CD14-positive monocyte (primary cell): ENCODE measurements at regions of chr5 and their contacts with region 1.

Region 1: GRCh38 chr5:74766849-74767578 is at the starts of genes GFM2 and NSA2:
- DNase-seq: peak; percentile 86 to 95 (median 88)
- H3K4me3 ChIP-seq: peak within 1 kb of the TSS; percentile 76 to 95 (median 87)
- H3K4me3 Mint-ChIP-seq: peak within 1 kb of the TSS; percentile 99 to 100
- H3K27ac ChIP-seq: peak within 1 kb of the TSS; percentile 69 to 84
- H3K27ac Mint-ChIP-seq: peak within 1 kb of the TSS; percentile 94 to 99 (median 97)
- H3K4me1 ChIP-seq: peaks cover 17 to 29% of the 10 kb centered on the region in 2 donors
- H3K4me1 Mint-ChIP-seq: peaks cover 19% of the 10 kb centered on the region
- H3K27me3 ChIP-seq: no peaks in the 10 kb centered on the region
- H3K27me3 Mint-ChIP-seq: no peaks in the 10 kb centered on the region
- CTCF ChIP-seq: peak; percentile 9
- polyA plus RNA-seq, gene GFM2: 9.3 to 11.3 (median 10.6) TPM
- polyA plus RNA-seq, gene NSA2: 31.2 to 45.9 (median 37.5) TPM

Region 2: DNA sequence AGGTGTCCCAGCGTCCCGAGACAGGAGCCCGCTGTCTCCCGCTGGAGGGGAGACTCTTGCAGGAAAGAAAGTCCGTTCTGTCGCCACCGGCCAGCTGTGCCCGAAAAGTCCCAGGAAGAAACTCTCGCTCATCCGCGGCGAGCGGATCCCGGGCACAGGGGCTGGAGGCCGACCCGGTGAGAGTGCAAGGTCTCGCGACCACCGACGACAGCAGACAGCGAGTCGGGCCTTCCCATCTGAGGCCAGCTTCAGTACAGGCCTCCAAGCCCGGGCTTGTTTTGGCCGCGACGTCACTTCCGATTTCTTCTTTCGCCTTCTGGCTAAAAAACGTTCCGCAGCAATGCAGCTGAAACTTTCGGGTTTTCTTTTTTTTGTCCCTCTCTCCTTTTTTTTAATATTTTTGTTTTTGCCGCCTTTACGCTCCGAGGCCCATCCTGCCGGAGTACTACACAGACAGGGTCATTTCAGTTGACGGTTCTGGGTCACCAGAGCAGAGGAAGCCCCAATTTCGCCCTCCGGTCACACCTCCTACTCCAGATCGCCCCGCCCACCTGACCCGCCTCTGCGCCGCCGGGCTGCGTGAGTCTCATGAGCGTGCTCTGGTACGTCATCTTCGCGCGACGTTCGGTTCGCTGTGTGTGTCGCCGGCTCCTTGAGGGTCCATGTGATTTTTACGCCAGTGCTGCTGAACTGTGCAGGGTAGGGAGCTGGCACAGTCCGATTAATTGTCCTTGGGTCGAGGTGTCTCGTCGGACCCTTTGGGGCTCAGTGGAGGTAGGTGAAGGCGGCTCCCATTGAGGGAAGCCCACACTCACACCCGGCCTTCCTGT is 1201.7 kb before region 1 on chr5 and contains the starts of genes ANKRA2 and UTP15:
- intact Hi-C with region 1: loop called in 1 of 2 experiments (anchors 2 kb)
- DNase-seq: peak; percentile 96 to 99 (median 98)
- H3K4me3 ChIP-seq: peak within 1 kb of the TSS; percentile 78 to 96 (median 92)
- H3K4me3 Mint-ChIP-seq: peak within 1 kb of the TSS; percentile 91 to 99
- H3K27ac ChIP-seq: peak within 1 kb of the TSS; percentile 87 to 98
- H3K27ac Mint-ChIP-seq: peak within 1 kb of the TSS; percentile 98 to 100 (median 99)
- H3K4me1 ChIP-seq: peaks cover 19 to 21% of the 10 kb centered on the region in 2 donors
- H3K4me1 Mint-ChIP-seq: peaks cover 18% of the 10 kb centered on the region
- H3K27me3 ChIP-seq: no peaks in the 10 kb centered on the region
- H3K27me3 Mint-ChIP-seq: peaks cover 0 to 1% (median 0%) of the 10 kb centered on the region in 3 donors
- CTCF ChIP-seq: no peak
- polyA plus RNA-seq, gene ANKRA2: 13.4 to 14.9 (median 13.5) TPM
- polyA plus RNA-seq, gene UTP15: 2.8 to 8.6 (median 2.8) TPM

Region 3: GRCh38 chr5:74684900-74685851 is 81.8 kb before region 1 on chr5 and contains the start of gene HEXB:
- intact Hi-C with region 1: loop called in 1 of 2 experiments (anchors 5 kb)
- DNase-seq: peak; percentile 92 to 93 (median 93)
- H3K4me3 ChIP-seq: peak within 1 kb of the TSS; percentile 94 to 99 (median 97)
- H3K4me3 Mint-ChIP-seq: peak within 1 kb of the TSS; percentile 89 to 94
- H3K27ac ChIP-seq: peak within 1 kb of the TSS; percentile 94 to 100
- H3K27ac Mint-ChIP-seq: peak within 1 kb of the TSS; percentile 93 to 99 (median 97)
- H3K4me1 ChIP-seq: peaks cover 20 to 21% of the 10 kb centered on the region in 2 donors
- H3K4me1 Mint-ChIP-seq: peaks cover 20% of the 10 kb centered on the region
- H3K27me3 ChIP-seq: no peaks in the 10 kb centered on the region
- H3K27me3 Mint-ChIP-seq: peaks cover 0 to 5% (median 2%) of the 10 kb centered on the region in 3 donors
- CTCF ChIP-seq: no peak
- polyA plus RNA-seq, gene HEXB: 158 to 518 (median 470) TPM

Region 4: GRCh38 chr5:74822288-74822687 is 55.3 kb after region 1 on chr5:
- intact Hi-C with region 1: no loop called
- DNase-seq: no peak
- H3K4me3 ChIP-seq: no peak overlapping the region
- H3K4me3 Mint-ChIP-seq: no peak overlapping the region
- H3K27ac ChIP-seq: no peak overlapping the region
- H3K27ac Mint-ChIP-seq: no peak overlapping the region
- H3K4me1 ChIP-seq: no peaks in the 10 kb centered on the region
- H3K4me1 Mint-ChIP-seq: peaks cover 15% of the 10 kb centered on the region
- H3K27me3 ChIP-seq: no peaks in the 10 kb centered on the region
- H3K27me3 Mint-ChIP-seq: no peaks in the 10 kb centered on the region
- CTCF ChIP-seq: no peak